OCI-LY7 (cell line): ENCODE measurements at regions of chr4 and their contacts with region 1.

Region 1: GRCh38 chr4:158809611-158810486 is 41.0 kb downstream of the FNIP2 start:
- DNase-seq: peak; percentile 72
- H3K4me3 ChIP-seq: no peak overlapping the region
- H3K27ac ChIP-seq: no peak overlapping the region
- H3K4me1 ChIP-seq: peaks cover 31% of the 10 kb centered on the region
- CTCF ChIP-seq: no peak

Region 2: GRCh38 chr4:158822348-158822747 is 12.5 kb after region 1 on chr4:
- CTCF ChIA-PET with region 1: no interaction called
- POLR2A ChIA-PET with region 1: interaction called, 10 read pairs
- intact Hi-C with region 1: no loop called
- DNase-seq: no peak
- H3K4me3 ChIP-seq: no peak overlapping the region
- H3K27ac ChIP-seq: no peak overlapping the region
- H3K4me1 ChIP-seq: no peaks in the 10 kb centered on the region
- CTCF ChIP-seq: no peak